Lower leg skin (tissue), 4 donors: ENCODE measurements at regions of chr20 and their contacts with region 1.

Region 1: DNA sequence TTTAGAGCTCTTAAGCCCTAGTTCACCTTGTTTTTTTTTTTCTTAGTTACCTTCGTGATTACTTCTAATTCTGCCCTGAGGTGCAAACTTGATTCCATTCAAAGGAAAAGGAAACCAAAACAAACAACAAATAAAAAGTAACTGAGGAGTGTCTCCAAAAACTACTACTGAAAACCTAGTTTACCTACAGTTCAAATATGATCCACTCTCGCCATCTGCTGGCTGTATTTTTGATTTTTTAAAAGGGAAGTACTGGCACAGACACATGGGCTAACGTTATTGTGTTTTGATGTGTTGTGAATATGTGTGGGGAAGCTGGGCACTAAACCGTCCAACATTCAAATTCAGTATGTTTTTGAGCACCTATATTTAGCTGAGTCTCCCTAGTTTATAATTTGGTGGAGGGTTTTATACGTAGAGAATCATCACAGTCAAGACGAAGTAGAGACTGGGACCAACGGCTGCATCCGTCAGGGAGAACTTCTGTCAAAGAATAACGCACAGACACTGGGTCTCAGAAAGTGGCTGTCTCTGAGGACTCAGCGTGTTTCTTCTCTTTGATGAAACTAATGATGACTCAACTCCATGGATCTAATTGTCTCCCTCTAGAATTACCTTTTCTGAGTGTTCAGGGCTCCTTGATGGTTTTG is 373.5 kb upstream of the BTBD3 start:
- DNase-seq: peak in 1 of 2 donors; percentile 48
- H3K4me3 ChIP-seq: no peak overlapping the region
- CTCF ChIP-seq: peak in 1 of 3 donors; percentile 8
- POLR2A ChIP-seq: no peak

Region 2: DNA sequence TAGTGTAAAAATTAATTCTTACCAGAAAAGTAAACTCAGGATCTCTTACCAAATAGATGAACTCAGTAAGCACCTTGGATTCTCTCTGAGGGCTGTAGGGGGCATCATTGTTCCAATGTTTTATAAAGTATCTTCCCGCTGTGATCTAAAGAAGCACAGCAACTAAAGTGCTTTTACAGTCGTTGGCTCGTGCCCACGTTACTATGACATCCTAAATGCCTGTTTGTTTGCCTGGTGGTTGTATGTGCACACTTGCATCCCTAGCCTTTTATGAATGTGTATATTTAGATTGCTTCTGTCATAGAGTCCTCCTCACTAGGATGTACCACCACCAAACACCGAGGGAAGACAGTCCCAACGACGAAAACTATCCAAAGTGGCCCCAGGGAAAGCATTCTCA is 1074.6 kb before region 1 on chr20:
- intact Hi-C with region 1: loop called (anchors 10 kb)
- DNase-seq: peak in 1 of 2 donors; percentile 68
- H3K4me3 ChIP-seq: no peak overlapping the region
- CTCF ChIP-seq: no peak
- POLR2A ChIP-seq: no peak

Region 3: GRCh38 chr20:10547276-10548114 is 996.7 kb before region 1 on chr20:
- intact Hi-C with region 1: loop called (anchors 5 kb)
- DNase-seq: no peak
- H3K4me3 ChIP-seq: no peak overlapping the region
- CTCF ChIP-seq: no peak
- POLR2A ChIP-seq: no peak

Region 4: GRCh38 chr20:10667077-10667401 is 877.1 kb before region 1 on chr20:
- intact Hi-C with region 1: loop called (anchors 10 kb)
- DNase-seq: peak in 1 of 2 donors; percentile 91
- H3K4me3 ChIP-seq: no peak overlapping the region
- CTCF ChIP-seq: no peak
- POLR2A ChIP-seq: no peak